Psoas muscle (tissue), 8 donors: ENCODE measurements at regions of chr1 and their contacts with region 1.

Region 1: GRCh38 chr1:29033829-29034466 is 89.8 kb downstream of the TMEM200B start:
- DNase-seq: no peak
- ATAC-seq: peak; percentile 75 to 90 (median 79)
- H3K4me3 ChIP-seq: no peak overlapping the region
- H3K27ac ChIP-seq: no peak overlapping the region
- H3K4me1 ChIP-seq: no peaks in the 10 kb centered on the region
- H3K27me3 ChIP-seq: no peaks in the 10 kb centered on the region
- CTCF ChIP-seq: peak; percentile 78

Region 2: GRCh38 chr1:28789412-28789811 is 244.5 kb before region 1 on chr1:
- intact Hi-C with region 1: loop called in 1 of 2 experiments (anchors 5 kb)
- DNase-seq: no peak
- ATAC-seq: no peak
- H3K4me3 ChIP-seq: no peak overlapping the region
- H3K27ac ChIP-seq: no peak overlapping the region
- H3K4me1 ChIP-seq: peaks cover 9% of the 10 kb centered on the region
- H3K27me3 ChIP-seq: no peaks in the 10 kb centered on the region
- CTCF ChIP-seq: no peak

Region 3: DNA sequence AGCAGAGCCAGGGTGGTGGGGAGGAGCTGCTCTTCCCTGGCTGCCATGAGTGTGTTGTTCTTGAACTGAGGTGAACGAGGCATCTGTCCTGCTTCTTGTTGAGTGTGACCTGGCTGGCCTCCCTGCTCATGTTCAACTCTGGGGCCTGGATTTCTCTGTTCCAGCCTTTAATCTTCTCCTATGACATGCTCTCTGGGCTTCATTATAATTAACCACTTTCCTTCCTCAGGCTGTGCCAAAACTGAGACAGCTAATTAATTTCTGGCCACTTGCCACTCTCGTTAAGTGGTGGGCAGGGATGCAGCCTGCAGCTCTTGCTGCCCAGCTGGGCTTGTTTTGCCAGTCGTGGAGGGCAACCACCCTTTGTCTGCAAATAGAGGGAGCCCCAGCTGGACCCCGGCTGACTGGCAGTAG is 198.7 kb before region 1 on chr1:
- intact Hi-C with region 1: no loop called
- DNase-seq: no peak
- ATAC-seq: no peak
- H3K4me3 ChIP-seq: no peak overlapping the region
- H3K27ac ChIP-seq: no peak overlapping the region
- H3K4me1 ChIP-seq: no peaks in the 10 kb centered on the region
- H3K27me3 ChIP-seq: no peaks in the 10 kb centered on the region
- CTCF ChIP-seq: no peak

Region 4: GRCh38 chr1:28933277-28933676 is 100.7 kb before region 1 on chr1:
- intact Hi-C with region 1: no loop called
- DNase-seq: no peak
- ATAC-seq: no peak
- H3K4me3 ChIP-seq: no peak overlapping the region
- H3K27ac ChIP-seq: no peak overlapping the region
- H3K4me1 ChIP-seq: peaks cover 14% of the 10 kb centered on the region
- H3K27me3 ChIP-seq: no peaks in the 10 kb centered on the region
- CTCF ChIP-seq: no peak

Region 5: DNA sequence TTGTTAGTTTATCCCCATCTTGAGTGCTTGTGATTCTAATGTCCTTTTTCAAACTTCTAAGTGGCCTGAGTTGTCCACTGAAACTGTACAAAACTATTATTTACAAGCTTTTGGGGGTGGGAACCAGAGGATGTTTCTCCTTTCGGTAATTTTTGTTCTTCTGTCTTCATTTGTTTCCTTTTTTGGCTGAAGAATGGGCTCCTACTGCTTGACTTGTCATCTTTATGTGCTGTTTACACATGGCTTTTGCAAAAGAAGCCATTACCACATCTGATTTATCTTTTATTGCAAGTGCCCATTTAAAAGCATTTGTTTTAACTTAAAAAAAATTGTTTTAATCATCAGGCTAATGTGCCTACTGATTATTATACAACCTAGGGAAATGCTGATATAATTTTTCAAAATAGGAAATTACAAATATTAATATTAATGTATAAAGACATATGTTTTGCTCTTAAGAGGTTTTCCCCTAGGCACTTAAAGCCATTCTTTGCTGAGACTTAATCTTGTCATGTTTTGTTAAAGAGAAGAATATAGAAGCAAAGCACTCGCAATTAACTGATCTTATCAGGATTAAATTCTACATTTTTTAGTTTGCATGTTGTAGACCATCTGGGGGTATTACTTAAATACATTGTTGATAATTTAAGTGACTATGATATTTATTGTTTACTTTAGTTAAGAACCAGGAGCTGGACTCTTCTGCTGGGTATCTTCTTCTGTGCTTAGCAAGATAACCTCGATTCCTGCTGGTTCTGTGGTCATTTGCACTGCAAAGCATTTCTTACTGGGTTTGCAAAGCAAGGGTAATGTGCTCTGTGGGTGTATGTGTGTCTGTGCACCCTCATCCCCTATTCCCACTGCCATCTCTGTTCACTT is 49.6 kb after region 1 on chr1:
- intact Hi-C with region 1: no loop called
- DNase-seq: no peak
- ATAC-seq: no peak
- H3K4me3 ChIP-seq: no peak overlapping the region
- H3K27ac ChIP-seq: no peak overlapping the region
- H3K4me1 ChIP-seq: no peaks in the 10 kb centered on the region
- H3K27me3 ChIP-seq: no peaks in the 10 kb centered on the region
- CTCF ChIP-seq: no peak

Region 6: GRCh38 chr1:29202584-29203340 is 168.8 kb after region 1 on chr1:
- intact Hi-C with region 1: loop called in 1 of 2 experiments (anchors 5 kb)
- DNase-seq: peak; percentile 94 to 97
- ATAC-seq: peak; percentile 97 to 98 (median 98)
- H3K4me3 ChIP-seq: no peak overlapping the region
- H3K27ac ChIP-seq: peak overlapping the region; percentile 80
- H3K4me1 ChIP-seq: peaks cover 11% of the 10 kb centered on the region
- H3K27me3 ChIP-seq: no peaks in the 10 kb centered on the region
- CTCF ChIP-seq: peak; percentile 98

Region 7: GRCh38 chr1:29368936-29369932 is 335.3 kb after region 1 on chr1:
- intact Hi-C with region 1: no loop called
- DNase-seq: no peak
- ATAC-seq: no peak
- H3K4me3 ChIP-seq: no peak overlapping the region
- H3K27ac ChIP-seq: no peak overlapping the region
- H3K4me1 ChIP-seq: no peaks in the 10 kb centered on the region
- H3K27me3 ChIP-seq: peaks cover 4 to 29% (median 7%) of the 10 kb centered on the region in 3 donors
- CTCF ChIP-seq: no peak